Natural killer cell (primary cell): ENCODE measurements at regions of chr7 and their contacts with region 1.

Region 1: GRCh38 chr7:156460858-156461627 is 179.5 kb upstream of the RNF32 start:
- DNase-seq: no peak
- ATAC-seq: no peak
- H3K4me3 ChIP-seq: no peak overlapping the region
- H3K4me3 Mint-ChIP-seq: no peak overlapping the region
- H3K27ac ChIP-seq: no peak overlapping the region
- H3K27ac Mint-ChIP-seq: no peak overlapping the region
- H3K4me1 ChIP-seq: no peaks in the 10 kb centered on the region
- H3K4me1 Mint-ChIP-seq: no peaks in the 10 kb centered on the region
- H3K27me3 ChIP-seq: no peaks in the 10 kb centered on the region
- H3K27me3 Mint-ChIP-seq: peaks cover 7 to 10% of the 10 kb centered on the region in 2 donors
- CTCF ChIP-seq: no peak

Region 2: GRCh38 chr7:156402255-156402654 is 58.8 kb before region 1 on chr7:
- intact Hi-C with region 1: loop called (anchors 10 kb)
- DNase-seq: no peak
- ATAC-seq: no peak
- H3K4me3 ChIP-seq: no peak overlapping the region
- H3K4me3 Mint-ChIP-seq: no peak overlapping the region
- H3K27ac ChIP-seq: no peak overlapping the region
- H3K27ac Mint-ChIP-seq: no peak overlapping the region
- H3K4me1 ChIP-seq: no peaks in the 10 kb centered on the region
- H3K4me1 Mint-ChIP-seq: no peaks in the 10 kb centered on the region
- H3K27me3 ChIP-seq: no peaks in the 10 kb centered on the region
- H3K27me3 Mint-ChIP-seq: no peaks in the 10 kb centered on the region
- CTCF ChIP-seq: no peak

Region 3: DNA sequence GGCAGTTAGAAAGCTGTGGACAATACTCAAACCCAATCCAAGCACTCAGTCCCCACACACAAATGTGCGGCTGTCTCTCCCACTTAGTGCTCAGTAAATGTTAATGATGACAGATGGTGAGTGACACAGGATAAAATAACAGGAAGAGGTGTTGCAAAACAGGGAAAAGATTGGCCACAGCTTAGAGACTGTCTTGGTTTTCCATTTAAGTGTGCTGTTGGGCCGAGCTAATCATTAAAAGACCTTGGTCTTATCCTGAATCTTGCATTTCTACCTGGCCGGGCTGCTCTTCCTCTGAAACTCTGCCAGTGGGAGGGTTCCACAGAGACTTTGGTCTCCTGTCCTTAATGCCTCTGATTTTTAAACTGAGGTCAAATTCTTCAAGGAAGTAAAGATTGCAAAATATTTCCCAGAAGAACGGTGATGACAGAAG is 66.4 kb after region 1 on chr7:
- intact Hi-C with region 1: no loop called
- DNase-seq: no peak
- ATAC-seq: no peak
- H3K4me3 ChIP-seq: no peak overlapping the region
- H3K4me3 Mint-ChIP-seq: no peak overlapping the region
- H3K27ac ChIP-seq: no peak overlapping the region
- H3K27ac Mint-ChIP-seq: no peak overlapping the region
- H3K4me1 ChIP-seq: no peaks in the 10 kb centered on the region
- H3K4me1 Mint-ChIP-seq: no peaks in the 10 kb centered on the region
- H3K27me3 ChIP-seq: no peaks in the 10 kb centered on the region
- H3K27me3 Mint-ChIP-seq: peaks cover 0 to 16% of the 10 kb centered on the region in 2 donors
- CTCF ChIP-seq: no peak